Activated CD4-positive, alpha-beta memory T cell treated with anti-CD3 and anti-CD28 coated beads, Interleukin-2, amount 10 ng/mL, durations not matched to agents 7 days and 5 days (primary cell): ENCODE measurements at regions of chr7 and their contacts with region 1.

Region 1: DNA sequence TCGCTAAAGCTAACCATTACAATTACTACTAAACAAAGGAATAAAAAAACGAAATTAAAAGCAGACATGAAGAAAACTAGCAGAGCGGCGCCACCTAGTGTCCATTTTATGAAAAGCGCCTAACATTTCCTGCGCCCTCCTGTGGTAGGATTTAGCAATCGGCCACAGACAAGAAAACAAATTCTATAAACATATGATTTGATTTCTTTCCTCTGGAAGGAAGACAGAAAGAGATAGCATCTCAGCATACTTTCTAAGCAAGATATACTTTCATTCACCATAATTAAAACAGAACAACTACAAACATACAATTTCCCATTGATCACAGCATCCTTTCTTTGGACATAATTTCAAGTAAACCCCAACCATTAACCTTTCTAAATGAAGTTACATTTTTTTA is 337.7 kb upstream of the NPVF start:
- DNase-seq: peak; percentile 72
- H3K4me3 Mint-ChIP-seq: no peak overlapping the region
- H3K27ac Mint-ChIP-seq: no peak overlapping the region
- H3K4me1 Mint-ChIP-seq: peaks cover 7% of the 10 kb centered on the region
- H3K27me3 Mint-ChIP-seq: no peaks in the 10 kb centered on the region

Region 2: DNA sequence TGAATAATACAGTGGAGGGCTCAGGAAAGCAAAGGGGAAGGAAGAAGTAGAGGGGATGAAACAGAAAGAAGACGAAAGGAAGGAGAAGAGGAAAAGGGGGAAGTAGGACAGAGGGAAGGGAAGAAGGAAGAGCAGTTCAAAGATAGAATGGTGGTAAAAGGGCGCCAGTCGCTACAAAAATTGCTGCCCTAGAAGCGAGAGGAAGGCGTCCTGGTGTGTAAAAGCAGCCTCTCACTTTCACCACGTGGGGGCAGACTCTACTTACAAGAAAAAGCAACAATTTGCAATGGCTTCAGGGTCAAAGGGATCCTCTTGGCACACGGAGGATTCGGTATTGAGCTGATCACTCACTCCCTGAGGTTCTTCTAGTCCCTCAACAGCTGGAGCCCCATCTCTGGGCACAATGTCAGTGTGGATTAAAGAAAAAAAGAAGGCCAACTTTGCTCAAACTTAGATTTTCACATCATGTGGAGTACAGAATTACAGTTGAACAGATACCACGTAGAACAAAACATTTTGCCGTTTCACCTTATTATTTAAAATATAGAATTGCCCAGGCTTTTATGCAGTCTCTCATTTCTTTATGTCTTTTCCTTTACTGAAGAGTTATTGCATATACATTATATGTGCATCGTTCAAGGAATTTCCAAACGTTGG is 306.2 kb before region 1 on chr7:
- CTCF ChIA-PET with region 1: interaction called, 104 read pairs
- POLR2A ChIA-PET with region 1: no interaction called
- DNase-seq: peak; percentile 72
- H3K4me3 Mint-ChIP-seq: no peak overlapping the region
- H3K27ac Mint-ChIP-seq: no peak overlapping the region
- H3K4me1 Mint-ChIP-seq: peaks cover 23% of the 10 kb centered on the region
- H3K27me3 Mint-ChIP-seq: peaks cover 9% of the 10 kb centered on the region

Region 3: DNA sequence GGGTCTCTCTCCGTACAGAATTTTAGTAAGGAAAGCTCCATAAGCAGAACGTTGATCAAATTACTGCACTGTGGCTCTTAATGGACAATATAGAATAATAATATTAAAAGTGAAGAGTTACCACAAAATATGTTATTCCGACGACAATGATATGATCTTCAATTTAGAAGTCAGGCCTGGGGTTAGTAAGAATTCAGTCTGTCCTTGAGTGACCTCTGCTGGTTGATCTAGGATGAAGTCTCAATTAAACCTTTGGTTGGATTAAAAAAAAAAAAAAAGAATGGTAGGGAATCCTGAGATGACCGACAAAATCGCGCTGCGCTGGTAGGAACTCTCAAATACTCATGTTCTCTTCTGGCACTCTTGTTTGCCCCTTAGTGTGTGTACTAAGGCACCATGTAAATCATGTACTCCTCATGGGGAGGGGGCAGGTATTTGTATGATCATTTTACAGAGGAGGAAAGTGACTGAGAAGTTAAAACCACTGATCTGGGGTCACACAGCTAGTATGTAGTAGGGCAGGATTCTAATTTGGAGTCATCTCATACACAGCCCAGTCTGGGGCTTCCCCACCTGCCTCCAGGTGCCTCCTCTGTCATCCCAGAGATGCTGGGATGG is 176.4 kb before region 1 on chr7:
- CTCF ChIA-PET with region 1: interaction called, 17 read pairs
- POLR2A ChIA-PET with region 1: no interaction called
- DNase-seq: no peak
- H3K4me3 Mint-ChIP-seq: no peak overlapping the region
- H3K27ac Mint-ChIP-seq: no peak overlapping the region
- H3K4me1 Mint-ChIP-seq: no peaks in the 10 kb centered on the region
- H3K27me3 Mint-ChIP-seq: peaks cover 22% of the 10 kb centered on the region

Region 4: DNA sequence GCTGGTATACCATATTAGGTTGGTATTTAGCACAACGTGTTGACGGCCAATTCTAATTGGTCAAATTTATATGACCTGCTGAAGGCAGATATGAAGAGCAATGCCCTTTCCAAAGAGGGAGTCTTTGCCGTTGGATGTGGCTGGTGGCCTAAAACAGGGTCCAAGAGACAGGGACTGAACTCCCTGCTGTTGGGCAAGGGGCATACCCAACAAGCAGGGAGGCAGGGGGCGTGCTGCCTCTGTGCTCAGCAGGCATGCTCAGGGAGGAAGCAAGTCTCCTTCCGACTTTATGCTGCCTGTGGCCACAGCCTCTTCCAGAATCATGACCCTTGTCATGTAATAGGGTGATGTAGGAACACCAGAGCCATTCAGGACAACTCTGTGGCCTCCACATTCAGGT is 170.0 kb before region 1 on chr7:
- CTCF ChIA-PET with region 1: interaction called, 17 read pairs
- POLR2A ChIA-PET with region 1: no interaction called
- DNase-seq: no peak
- H3K4me3 Mint-ChIP-seq: no peak overlapping the region
- H3K27ac Mint-ChIP-seq: no peak overlapping the region
- H3K4me1 Mint-ChIP-seq: no peaks in the 10 kb centered on the region
- H3K27me3 Mint-ChIP-seq: peaks cover 10% of the 10 kb centered on the region

Region 5: DNA sequence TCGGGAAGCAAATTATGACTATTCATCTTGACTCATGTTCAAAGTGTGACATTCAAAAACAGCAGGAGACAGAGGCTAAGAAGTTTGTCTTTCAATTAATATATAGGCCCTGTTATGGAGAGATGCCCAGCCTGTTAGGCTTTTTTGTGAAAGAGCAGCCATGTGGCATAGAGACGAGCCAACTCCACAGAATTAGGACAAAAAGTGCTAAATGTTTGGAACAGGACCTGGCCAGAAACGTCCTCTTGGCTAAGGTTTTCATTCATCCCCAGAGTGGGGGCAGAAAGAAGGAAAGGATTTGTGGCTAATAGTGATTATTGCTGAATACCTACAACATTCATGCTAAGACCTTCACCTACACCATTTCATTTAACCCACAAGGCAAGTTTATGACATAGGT is 13.0 kb before region 1 on chr7:
- CTCF ChIA-PET with region 1: no interaction called
- POLR2A ChIA-PET with region 1: no interaction called
- DNase-seq: no peak
- H3K4me3 Mint-ChIP-seq: no peak overlapping the region
- H3K27ac Mint-ChIP-seq: no peak overlapping the region
- H3K4me1 Mint-ChIP-seq: no peaks in the 10 kb centered on the region
- H3K27me3 Mint-ChIP-seq: peaks cover 21% of the 10 kb centered on the region

Region 6: GRCh38 chr7:25694699-25695098 is 128.8 kb after region 1 on chr7:
- CTCF ChIA-PET with region 1: no interaction called
- POLR2A ChIA-PET with region 1: no interaction called
- DNase-seq: no peak
- H3K4me3 Mint-ChIP-seq: no peak overlapping the region
- H3K27ac Mint-ChIP-seq: no peak overlapping the region
- H3K4me1 Mint-ChIP-seq: no peaks in the 10 kb centered on the region
- H3K27me3 Mint-ChIP-seq: peaks cover 10% of the 10 kb centered on the region

Region 7: GRCh38 chr7:25851332-25852210 is 285.6 kb after region 1 on chr7:
- CTCF ChIA-PET with region 1: interaction called, 12 read pairs
- POLR2A ChIA-PET with region 1: no interaction called
- DNase-seq: peak; percentile 69
- H3K4me3 Mint-ChIP-seq: peak overlapping the region; percentile 41
- H3K27ac Mint-ChIP-seq: peak overlapping the region; percentile 62
- H3K4me1 Mint-ChIP-seq: peaks cover 22% of the 10 kb centered on the region
- H3K27me3 Mint-ChIP-seq: peaks cover 52% of the 10 kb centered on the region